Pancreas (tissue), 10 donors: ENCODE measurements at regions of chr2 and their contacts with region 1.

Region 1: GRCh38 chr2:181715033-181715630 is 34.8 kb upstream of the NEUROD1 start:
- DNase-seq: peak in 5 of 6 donors; percentile 38 to 76 (median 58)
- ATAC-seq: peak; percentile 88 to 98 (median 95)
- H3K4me3 ChIP-seq: no peak overlapping the region
- H3K27ac ChIP-seq: no peak overlapping the region
- H3K4me1 ChIP-seq: no peaks in the 10 kb centered on the region
- H3K27me3 ChIP-seq: no peaks in the 10 kb centered on the region
- CTCF ChIP-seq: peak; percentile 27 to 56 (median 52)

Region 2: DNA sequence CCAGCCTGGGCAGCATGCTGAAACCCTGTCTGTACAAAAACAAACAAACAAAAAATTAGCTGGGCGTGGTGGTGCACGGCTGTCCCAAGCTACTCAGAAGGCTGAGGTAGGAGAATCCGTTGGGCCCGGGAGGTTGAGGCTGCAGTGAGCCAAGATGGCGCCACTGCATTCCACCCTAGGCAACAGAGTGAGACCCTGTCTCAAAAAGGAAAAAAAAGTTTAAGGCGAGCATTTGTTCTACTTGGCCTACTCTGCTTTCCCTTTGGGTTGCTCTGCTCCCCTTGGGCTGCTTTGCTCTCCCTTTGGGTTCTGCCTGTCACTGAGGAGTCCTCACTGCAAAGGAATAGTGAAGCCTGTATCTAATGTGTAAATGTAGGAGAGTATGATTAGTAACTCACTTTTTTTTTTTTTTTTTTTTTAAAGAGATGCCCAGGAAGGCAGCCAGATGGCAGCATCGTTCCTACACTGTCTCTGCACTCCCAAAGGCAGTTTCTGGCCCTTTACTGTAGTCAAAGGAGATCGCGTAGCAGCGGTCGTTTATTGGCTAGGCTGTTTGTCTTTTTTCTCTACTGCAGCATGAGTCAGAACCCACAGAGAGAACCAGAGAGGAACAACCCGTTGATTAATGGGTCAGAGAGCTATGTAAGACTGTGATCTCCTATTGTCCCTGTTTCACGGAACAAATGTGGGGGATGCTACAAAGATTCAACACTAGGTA is 1589.7 kb before region 1 on chr2:
- intact Hi-C with region 1: loop called in 1 of 3 experiments (anchors 10 kb)
- DNase-seq: peak in 4 of 6 donors; percentile 22 to 50 (median 31)
- ATAC-seq: peak; percentile 87 to 96 (median 93)
- H3K4me3 ChIP-seq: no peak overlapping the region
- H3K27ac ChIP-seq: no peak overlapping the region
- H3K4me1 ChIP-seq: no peaks in the 10 kb centered on the region
- H3K27me3 ChIP-seq: no peaks in the 10 kb centered on the region
- CTCF ChIP-seq: peak in 2 of 4 donors; percentile 34 to 41

Region 3: GRCh38 chr2:181140414-181140813 is 574.7 kb before region 1 on chr2:
- intact Hi-C with region 1: no loop called
- DNase-seq: no peak
- ATAC-seq: peak in 1 of 4 donors; percentile 32
- H3K4me3 ChIP-seq: no peak overlapping the region
- H3K27ac ChIP-seq: no peak overlapping the region
- H3K4me1 ChIP-seq: no peaks in the 10 kb centered on the region
- H3K27me3 ChIP-seq: no peaks in the 10 kb centered on the region
- CTCF ChIP-seq: no peak

Region 4: GRCh38 chr2:181573140-181573736 is 141.9 kb before region 1 on chr2:
- intact Hi-C with region 1: loop called in 1 of 3 experiments (anchors 10 kb)
- DNase-seq: no peak
- ATAC-seq: peak in 3 of 4 donors; percentile 61 to 76 (median 67)
- H3K4me3 ChIP-seq: no peak overlapping the region
- H3K27ac ChIP-seq: no peak overlapping the region
- H3K4me1 ChIP-seq: no peaks in the 10 kb centered on the region
- H3K27me3 ChIP-seq: no peaks in the 10 kb centered on the region
- CTCF ChIP-seq: peak in 2 of 4 donors; percentile 39 to 41